Left cardiac atrium (tissue), 4 donors: ENCODE measurements at regions of chr3 and their contacts with region 1.

Region 1: GRCh38 chr3:124775877-124776276 is 45.6 kb downstream of the UMPS start:
- DNase-seq: no peak
- ATAC-seq: no peak

Region 2: DNA sequence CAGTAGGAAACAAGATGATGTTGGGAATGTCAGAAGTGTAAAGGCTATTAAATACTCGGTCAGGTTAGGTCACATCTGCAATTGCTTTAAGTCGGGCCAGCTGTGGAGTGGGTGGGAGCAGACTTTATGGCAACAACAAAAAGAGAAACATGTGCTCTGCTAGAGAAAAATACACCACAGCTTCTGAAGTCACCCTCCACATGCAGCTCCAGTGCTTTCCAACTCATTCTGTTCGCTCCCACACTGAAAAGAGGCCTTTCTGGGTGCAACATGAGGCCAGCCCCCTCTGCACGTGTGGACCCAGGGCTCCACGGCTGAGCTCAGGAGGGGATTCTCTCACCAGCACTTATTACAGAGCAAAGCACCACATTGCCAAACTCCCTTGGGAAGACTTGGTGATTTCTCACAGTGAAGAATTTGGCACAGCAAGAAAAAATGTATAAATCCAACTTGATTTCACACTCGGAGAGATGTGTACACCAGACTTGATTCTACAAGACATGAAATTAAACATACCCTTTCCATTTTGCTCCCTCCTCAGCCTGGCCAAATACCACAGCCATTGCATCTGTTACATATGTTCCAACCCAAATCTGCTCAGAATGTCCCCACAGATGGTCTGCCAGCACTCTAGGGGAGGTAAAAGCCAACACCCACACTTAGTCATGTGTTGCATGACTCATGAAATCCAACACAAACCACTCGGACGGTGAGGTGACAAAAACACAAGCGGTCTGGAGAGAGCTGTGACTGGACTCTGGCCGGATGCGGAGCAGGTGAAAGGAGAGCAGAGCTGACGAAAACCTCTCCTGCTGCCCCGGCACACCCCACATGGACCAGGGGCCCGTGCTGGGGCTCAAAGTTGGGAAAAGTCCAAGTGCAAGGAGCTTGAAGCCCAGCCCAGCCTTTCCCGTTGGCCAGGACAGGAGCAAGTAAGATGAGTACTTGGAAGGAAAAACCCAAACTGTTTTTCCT is 36.7 kb after region 1 on chr3:
- intact Hi-C with region 1: loop called in 1 of 2 experiments (anchors 5 kb)
- DNase-seq: peak; percentile 74
- ATAC-seq: peak; percentile 79 to 89